ENCODE measurements at regions of chr22 and their contacts with region 1.

Region 1: GRCh38 chr22:38569972-38570778 is at the start of gene DMC1:
- H3K4me3 ChIP-seq: peak within 1 kb of the TSS; percentile 62
- H3K27ac ChIP-seq: peak within 1 kb of the TSS; percentile 61
- H3K4me1 ChIP-seq: peaks cover 20% of the 10 kb centered on the region
- CTCF ChIP-seq: no peak

Region 2: GRCh38 chr22:37752466-37753087 is 817.6 kb before region 1 on chr22:
- CTCF ChIA-PET with region 1: no interaction called
- POLR2A ChIA-PET with region 1: no interaction called
- H3K4me3 ChIP-seq: no peak overlapping the region
- H3K27ac ChIP-seq: 0 out of 2 replicates have a peak overlapping the region, but pooled peaks have one; percentile 24
- H3K4me1 ChIP-seq: peaks cover 2% of the 10 kb centered on the region; the same call in 1 of the 2 replicates
- CTCF ChIP-seq: no peak

Region 3: DNA sequence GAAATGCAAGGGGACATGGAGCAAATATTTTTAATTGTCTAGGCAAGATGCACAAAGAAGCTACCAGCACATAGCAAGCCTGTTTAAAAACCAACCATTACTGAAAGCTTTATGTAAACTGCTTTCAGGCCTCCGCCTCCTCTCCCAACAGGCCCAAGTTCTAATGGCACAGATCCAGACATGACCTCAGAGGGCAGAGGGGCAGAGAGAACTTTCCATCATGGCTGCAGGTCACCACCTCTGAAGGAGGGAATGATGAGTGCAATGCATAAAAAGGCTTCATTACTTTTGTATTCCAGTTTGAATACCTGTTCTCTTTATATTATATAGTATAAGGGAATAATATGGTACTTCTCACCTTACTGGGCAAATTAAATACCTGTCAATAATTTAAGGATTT is 79.3 kb before region 1 on chr22:
- CTCF ChIA-PET with region 1: interaction called, 10 read pairs
- POLR2A ChIA-PET with region 1: no interaction called
- H3K4me3 ChIP-seq: no peak overlapping the region
- H3K27ac ChIP-seq: no peak overlapping the region
- H3K4me1 ChIP-seq: no peaks in the 10 kb centered on the region
- CTCF ChIP-seq: no peak

Region 4: GRCh38 chr22:38503021-38503420 is 67.2 kb before region 1 on chr22:
- CTCF ChIA-PET with region 1: interaction called, 10 read pairs
- POLR2A ChIA-PET with region 1: interaction called, 6 read pairs
- H3K4me3 ChIP-seq: peak overlapping the region; percentile 79
- H3K27ac ChIP-seq: peak overlapping the region; percentile 1; the same call in 1 of the 2 replicates
- H3K4me1 ChIP-seq: 0 out of 2 replicates have a peak, but pooled peaks cover 5% of the 10 kb centered on the region
- CTCF ChIP-seq: no peak

Region 5: DNA sequence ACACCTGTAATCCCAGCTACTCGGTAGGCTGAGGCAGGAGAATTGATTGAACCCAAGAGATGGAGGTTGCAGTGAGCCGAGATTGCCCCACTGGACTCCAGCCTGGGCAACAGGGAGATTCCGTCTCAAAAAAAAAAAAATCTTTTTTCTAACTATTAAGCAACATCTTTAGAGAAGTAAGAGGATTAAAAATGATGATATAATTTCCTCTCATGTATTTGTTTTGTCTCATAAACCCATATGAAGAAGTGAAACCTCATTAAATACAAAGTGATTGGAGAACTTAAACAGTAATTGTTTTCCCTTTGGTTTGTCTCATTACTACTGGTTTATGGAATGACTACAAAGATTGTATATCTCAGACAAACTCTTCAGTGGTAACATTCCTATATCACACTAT is 20.7 kb before region 1 on chr22:
- CTCF ChIA-PET with region 1: interaction called, 11 read pairs
- POLR2A ChIA-PET with region 1: interaction called, 3 read pairs
- H3K4me3 ChIP-seq: no peak overlapping the region
- H3K27ac ChIP-seq: no peak overlapping the region
- H3K4me1 ChIP-seq: no peaks in the 10 kb centered on the region
- CTCF ChIP-seq: no peak

Measured in HEK293 (cell line).